Activated CD8-positive, alpha-beta T cell treated with anti-CD3 and anti-CD28 coated beads, Interleukin-2, amount 10 ng/mL, durations not matched to agents 7 days and 5 days (primary cell): ENCODE measurements at regions of chr14 and their contacts with region 1.

Region 1: DNA sequence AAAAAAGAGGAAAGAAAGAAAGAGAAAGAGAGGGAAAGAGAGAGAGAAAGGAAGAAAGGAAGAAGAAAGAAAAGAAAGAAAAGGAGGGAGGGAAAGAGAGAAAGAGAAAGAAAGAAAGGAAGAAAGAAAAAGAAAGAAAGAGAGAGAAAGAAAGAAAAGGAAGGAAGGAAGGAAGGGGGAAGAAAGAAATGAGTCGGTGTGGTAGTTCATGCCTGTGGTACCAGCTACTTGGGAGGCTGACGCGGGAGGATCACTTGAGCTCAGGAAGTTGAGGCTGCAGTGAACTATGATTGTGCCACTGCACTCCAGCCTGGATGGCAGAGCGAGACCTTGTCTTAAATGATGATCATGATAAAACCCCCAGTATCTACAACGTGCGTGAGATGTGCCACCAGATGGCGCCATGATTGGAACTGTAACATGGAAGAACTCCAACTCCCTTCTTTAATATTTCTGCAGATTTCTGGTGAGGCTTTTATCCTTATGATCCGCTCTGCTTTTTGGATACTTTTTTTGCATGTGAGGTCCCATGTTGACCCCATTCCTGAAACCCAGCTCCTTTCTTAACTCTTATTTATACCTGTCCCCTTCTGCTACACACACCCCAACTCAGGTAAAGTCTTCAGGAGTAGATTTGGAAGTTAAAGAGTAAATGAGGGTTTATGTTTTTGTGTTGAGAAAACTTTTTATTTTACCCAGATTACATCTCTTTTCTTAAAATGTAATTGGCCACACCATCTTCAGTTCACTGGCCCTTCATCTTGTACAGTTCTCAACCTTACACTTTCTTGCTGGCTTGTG is 25.6 kb downstream of the RNASE10 start:
- DNase-seq: peak; percentile 82
- ATAC-seq: peak; percentile 94
- H3K4me3 Mint-ChIP-seq: no peak overlapping the region
- H3K27ac Mint-ChIP-seq: no peak overlapping the region
- H3K4me1 Mint-ChIP-seq: peaks cover 9% of the 10 kb centered on the region
- H3K27me3 Mint-ChIP-seq: peaks cover 30% of the 10 kb centered on the region

Region 2: GRCh38 chr14:20440882-20441281 is 90.1 kb before region 1 on chr14:
- CTCF ChIA-PET with region 1: no interaction called
- POLR2A ChIA-PET with region 1: no interaction called
- DNase-seq: peak; percentile 60
- ATAC-seq: peak; percentile 95
- H3K4me3 Mint-ChIP-seq: peak overlapping the region; percentile 45
- H3K27ac Mint-ChIP-seq: peak overlapping the region; percentile 79
- H3K4me1 Mint-ChIP-seq: peaks cover 24% of the 10 kb centered on the region
- H3K27me3 Mint-ChIP-seq: no peaks in the 10 kb centered on the region

Region 3: DNA sequence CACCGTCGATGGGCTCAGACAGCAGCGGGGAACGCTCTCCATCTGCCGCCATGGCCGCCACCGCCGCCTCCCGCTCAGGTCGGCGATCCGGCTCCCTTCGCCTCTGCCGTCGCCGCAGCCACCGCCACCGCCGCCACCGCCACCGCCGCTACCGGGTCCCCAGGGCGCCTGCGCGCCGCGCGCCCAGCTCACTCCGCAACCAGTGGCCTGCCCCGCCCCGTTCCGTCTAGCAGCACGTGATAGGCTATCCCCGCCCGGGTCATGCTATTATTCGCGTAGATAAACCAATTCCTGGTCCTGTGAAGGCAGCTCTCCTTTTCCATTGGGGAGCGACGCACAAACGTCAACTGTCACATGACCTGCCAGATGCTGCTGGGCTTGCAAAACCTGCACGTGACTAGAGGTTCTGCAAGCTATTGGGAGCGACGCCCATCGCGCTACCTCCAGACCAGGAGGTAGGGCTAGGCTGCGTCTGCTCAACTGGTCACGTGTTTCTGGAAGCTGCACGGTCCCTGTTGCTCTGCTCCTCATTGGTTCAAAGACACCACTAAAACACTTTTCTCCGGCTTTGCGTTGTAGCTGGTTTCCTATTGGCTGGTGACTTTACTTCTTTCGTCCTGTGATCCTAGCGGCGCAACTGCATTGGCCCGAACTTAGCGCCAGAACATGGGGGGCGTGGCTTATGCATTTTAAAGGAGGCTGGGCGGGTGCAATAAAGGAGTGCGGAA is 69.5 kb before region 1 on chr14 and contains the start of gene PIP4P1:
- CTCF ChIA-PET with region 1: interaction called, 11 read pairs
- POLR2A ChIA-PET with region 1: no interaction called
- DNase-seq: peak; percentile 99
- ATAC-seq: peak; percentile 97
- H3K4me3 Mint-ChIP-seq: peak within 1 kb of the TSS; percentile 95
- H3K27ac Mint-ChIP-seq: peak within 1 kb of the TSS; percentile 91
- H3K4me1 Mint-ChIP-seq: peaks cover 38% of the 10 kb centered on the region
- H3K27me3 Mint-ChIP-seq: peaks cover 2% of the 10 kb centered on the region
- total RNA-seq, gene PIP4P1: 31.3 to 31.6 TPM

Region 4: DNA sequence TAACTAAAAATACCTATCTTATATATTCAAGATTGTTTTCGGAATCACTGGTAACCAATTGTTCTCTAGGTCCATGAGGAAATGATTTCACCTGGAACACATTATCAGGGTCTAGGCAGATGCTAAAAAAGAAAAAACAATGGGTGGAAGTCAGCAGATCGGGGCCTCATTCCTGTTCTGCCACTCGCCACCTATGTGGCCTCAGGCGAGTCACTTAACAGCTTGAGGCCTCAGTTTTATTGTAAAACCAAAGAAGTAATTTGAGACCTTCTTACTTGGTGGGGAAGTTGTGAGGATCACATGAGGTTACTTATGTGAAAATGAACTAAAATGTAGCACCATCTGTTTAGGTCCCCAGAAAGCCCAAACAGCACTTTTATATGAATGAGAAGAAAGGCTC is 31.9 kb before region 1 on chr14:
- CTCF ChIA-PET with region 1: no interaction called
- POLR2A ChIA-PET with region 1: no interaction called
- DNase-seq: no peak
- ATAC-seq: no peak
- H3K4me3 Mint-ChIP-seq: no peak overlapping the region
- H3K27ac Mint-ChIP-seq: no peak overlapping the region
- H3K4me1 Mint-ChIP-seq: peaks cover 21% of the 10 kb centered on the region
- H3K27me3 Mint-ChIP-seq: peaks cover 2% of the 10 kb centered on the region

Region 5: GRCh38 chr14:20516906-20517305 is 14.1 kb before region 1 on chr14:
- CTCF ChIA-PET with region 1: interaction called, 11 read pairs
- POLR2A ChIA-PET with region 1: no interaction called
- DNase-seq: no peak
- ATAC-seq: no peak
- H3K4me3 Mint-ChIP-seq: no peak overlapping the region
- H3K27ac Mint-ChIP-seq: no peak overlapping the region
- H3K4me1 Mint-ChIP-seq: no peaks in the 10 kb centered on the region
- H3K27me3 Mint-ChIP-seq: peaks cover 9% of the 10 kb centered on the region

Region 6: GRCh38 chr14:20546877-20547276 is 15.9 kb after region 1 on chr14:
- CTCF ChIA-PET with region 1: interaction called, 11 read pairs
- POLR2A ChIA-PET with region 1: no interaction called
- DNase-seq: no peak
- ATAC-seq: no peak
- H3K4me3 Mint-ChIP-seq: no peak overlapping the region
- H3K27ac Mint-ChIP-seq: no peak overlapping the region
- H3K4me1 Mint-ChIP-seq: no peaks in the 10 kb centered on the region
- H3K27me3 Mint-ChIP-seq: peaks cover 29% of the 10 kb centered on the region

Region 7: DNA sequence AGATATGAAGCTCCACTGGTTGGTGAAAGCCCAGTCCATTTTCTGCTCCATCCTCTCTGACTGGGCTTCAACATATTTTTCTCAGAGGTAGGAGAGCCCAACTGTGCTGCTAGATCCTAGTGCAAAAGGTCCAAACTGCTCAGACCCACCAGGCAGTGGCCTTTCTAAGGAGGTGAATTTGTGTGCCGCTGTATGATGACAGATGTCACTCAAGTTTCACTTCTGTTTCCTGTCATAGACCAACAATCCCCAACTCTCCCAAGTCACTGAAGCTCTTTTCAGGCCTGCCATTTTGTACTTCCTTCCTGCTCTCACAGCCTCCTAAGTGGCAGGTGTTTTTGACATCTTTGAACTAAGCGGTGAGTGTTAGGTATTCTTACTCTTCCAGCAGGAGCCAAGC is 137.0 kb after region 1 on chr14:
- CTCF ChIA-PET with region 1: no interaction called
- POLR2A ChIA-PET with region 1: no interaction called
- DNase-seq: peak; percentile 34
- ATAC-seq: peak; percentile 28
- H3K4me3 Mint-ChIP-seq: peak overlapping the region; percentile 6
- H3K27ac Mint-ChIP-seq: peak overlapping the region; percentile 88
- H3K4me1 Mint-ChIP-seq: peaks cover 41% of the 10 kb centered on the region
- H3K27me3 Mint-ChIP-seq: peaks cover 11% of the 10 kb centered on the region